Activated naive CD4-positive, alpha-beta T cell treated with anti-CD3 and anti-CD28 coated beads for 36 hours (primary cell): ENCODE measurements at regions of chr9 and their contacts with region 1.

Region 1: DNA sequence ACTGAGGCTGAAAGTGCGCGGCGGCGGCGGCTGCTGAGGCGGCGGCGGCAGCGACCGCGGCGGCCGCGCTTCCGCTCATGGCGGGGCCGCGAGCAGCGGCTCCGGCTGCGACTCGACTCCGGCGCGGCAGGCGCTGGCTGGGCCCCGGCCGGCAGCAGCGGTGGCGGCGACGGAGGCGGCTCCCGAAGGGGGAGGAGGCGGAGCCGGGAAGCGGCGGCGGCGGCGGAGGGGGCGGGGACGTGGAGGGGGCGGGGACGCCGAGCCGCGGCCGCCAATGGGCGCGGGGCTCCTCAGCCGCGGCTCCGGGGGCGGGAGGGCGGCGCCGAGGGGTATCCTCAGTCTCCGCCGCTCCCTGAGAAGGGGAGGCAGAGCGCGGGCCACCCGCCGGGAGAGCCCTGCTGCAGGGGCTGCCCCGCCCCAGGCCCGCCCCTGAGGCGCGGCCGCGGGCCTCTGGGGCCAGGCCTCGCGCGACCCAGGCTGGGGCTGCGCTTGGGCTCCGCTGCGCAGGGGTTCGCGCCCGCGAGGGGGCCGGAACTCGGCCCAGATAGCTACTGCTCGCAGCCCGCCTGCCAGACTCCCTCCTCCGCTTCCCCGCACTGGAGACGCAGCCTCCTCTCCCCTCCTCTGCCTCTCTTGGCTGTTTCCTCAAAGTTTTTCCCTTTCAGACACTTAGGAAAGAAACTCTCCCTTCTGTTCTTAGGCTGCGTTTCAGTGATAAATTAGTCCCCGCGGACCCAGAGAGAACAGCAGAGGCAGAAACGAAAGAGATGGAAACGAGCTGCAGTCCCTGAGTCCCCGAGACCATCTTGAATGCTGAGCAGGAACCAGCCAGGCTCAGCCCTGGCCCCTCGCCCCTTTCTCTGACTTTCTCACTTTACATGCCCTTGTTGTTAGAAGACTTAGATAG is 85.0 kb upstream of the MELK start:
- DNase-seq: peak; percentile 87
- H3K4me3 Mint-ChIP-seq: peak overlapping the region; percentile 90
- H3K27ac Mint-ChIP-seq: peak overlapping the region; percentile 98
- H3K4me1 Mint-ChIP-seq: peaks cover 61% of the 10 kb centered on the region
- H3K27me3 Mint-ChIP-seq: no peaks in the 10 kb centered on the region

Region 2: DNA sequence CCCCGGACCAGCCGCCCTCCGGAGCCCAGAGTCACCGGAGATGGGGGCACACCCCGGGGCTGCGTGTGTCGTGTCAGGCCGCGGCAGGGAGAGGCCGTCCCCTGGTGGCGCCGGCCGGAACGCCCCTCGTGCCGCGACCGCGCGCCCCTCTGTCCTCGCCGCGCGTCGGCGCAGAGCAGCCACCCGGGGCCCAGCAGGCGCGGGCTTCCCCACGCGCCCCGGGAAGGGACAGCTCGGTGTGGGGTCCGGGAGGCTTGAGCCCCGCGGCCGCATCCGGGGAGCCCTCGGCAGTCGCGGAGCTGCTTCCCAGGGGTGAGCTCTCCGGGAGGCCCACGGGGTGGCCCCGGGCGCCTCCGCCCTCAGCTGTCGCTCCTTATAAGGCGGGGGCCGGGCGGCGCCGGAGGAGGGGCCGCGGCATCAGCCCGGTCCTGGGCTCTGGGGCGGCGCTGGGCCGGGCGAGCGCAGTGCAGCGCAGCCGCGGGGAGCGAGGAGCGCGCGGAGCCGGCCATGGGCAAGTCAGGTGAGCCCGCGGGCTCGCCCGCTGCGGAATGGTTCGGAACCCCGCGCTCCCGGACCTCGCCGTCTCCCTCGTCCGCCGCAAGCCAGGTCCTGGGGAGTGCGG is 351.4 kb before region 1 on chr9 and contains the start of gene GLIPR2:
- CTCF ChIA-PET with region 1: no interaction called
- intact Hi-C with region 1: loop called (anchors 5 kb)
- DNase-seq: peak; percentile 80
- H3K4me3 Mint-ChIP-seq: peak within 1 kb of the TSS; percentile 86
- H3K27ac Mint-ChIP-seq: no peak within 1 kb of the TSS
- H3K4me1 Mint-ChIP-seq: peaks cover 44% of the 10 kb centered on the region
- H3K27me3 Mint-ChIP-seq: no peaks in the 10 kb centered on the region
- total RNA-seq, gene GLIPR2: 8.0 to 9.7 TPM

Region 3: DNA sequence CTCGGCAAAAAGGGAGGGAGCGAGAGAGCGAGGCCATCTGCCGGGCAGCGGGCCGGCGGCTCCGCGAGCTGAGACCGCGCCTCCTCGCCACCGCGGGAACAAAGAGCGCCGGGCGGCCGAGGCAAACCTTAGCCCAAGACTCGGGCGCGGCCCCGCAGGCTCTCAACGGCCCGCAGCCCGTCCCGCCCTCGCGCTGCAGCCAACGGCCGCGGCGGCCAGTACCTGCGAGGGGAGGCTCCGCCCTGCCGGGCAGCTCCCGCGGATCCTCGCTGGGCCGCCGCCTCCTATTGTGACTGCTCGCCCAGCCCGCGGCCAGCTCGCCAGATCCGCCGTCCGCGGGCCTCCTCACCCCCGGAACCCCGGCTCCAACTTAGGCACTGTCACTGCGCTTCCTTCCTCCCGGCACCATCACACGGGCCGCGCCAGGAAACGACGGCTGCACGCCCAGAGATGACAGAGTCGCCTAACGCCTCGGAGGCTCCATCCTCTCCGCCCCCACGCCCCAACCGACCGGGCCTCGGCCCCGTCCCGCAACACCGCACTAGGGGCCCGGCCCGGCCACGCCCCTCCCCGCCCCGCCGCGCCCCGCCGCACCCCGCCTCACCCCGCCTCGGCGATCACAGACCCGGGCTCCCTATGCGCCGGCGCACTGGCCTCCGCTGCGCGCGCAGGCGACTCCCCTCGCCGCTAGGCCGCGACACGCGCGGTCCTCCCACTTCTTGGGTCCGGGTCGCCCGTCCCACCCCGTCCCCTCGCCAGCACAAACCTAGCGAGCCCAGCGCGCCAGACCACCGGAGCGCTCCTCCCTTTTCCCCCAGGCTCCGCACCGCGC is 87.2 kb before region 1 on chr9:
- CTCF ChIA-PET with region 1: interaction called, 3 read pairs
- intact Hi-C with region 1: loop called (anchors 1 kb)
- DNase-seq: peak; percentile 90
- H3K4me3 Mint-ChIP-seq: peak overlapping the region; percentile 86
- H3K27ac Mint-ChIP-seq: peak overlapping the region; percentile 95
- H3K4me1 Mint-ChIP-seq: peaks cover 37% of the 10 kb centered on the region
- H3K27me3 Mint-ChIP-seq: no peaks in the 10 kb centered on the region

Region 4: GRCh38 chr9:36470643-36471290 is 17.0 kb before region 1 on chr9:
- CTCF ChIA-PET with region 1: interaction called, 4 read pairs
- intact Hi-C with region 1: loop called (anchors 1 kb)
- DNase-seq: peak; percentile 78
- H3K4me3 Mint-ChIP-seq: peak overlapping the region; percentile 65
- H3K27ac Mint-ChIP-seq: peak overlapping the region; percentile 89
- H3K4me1 Mint-ChIP-seq: peaks cover 34% of the 10 kb centered on the region
- H3K27me3 Mint-ChIP-seq: no peaks in the 10 kb centered on the region

Region 5: DNA sequence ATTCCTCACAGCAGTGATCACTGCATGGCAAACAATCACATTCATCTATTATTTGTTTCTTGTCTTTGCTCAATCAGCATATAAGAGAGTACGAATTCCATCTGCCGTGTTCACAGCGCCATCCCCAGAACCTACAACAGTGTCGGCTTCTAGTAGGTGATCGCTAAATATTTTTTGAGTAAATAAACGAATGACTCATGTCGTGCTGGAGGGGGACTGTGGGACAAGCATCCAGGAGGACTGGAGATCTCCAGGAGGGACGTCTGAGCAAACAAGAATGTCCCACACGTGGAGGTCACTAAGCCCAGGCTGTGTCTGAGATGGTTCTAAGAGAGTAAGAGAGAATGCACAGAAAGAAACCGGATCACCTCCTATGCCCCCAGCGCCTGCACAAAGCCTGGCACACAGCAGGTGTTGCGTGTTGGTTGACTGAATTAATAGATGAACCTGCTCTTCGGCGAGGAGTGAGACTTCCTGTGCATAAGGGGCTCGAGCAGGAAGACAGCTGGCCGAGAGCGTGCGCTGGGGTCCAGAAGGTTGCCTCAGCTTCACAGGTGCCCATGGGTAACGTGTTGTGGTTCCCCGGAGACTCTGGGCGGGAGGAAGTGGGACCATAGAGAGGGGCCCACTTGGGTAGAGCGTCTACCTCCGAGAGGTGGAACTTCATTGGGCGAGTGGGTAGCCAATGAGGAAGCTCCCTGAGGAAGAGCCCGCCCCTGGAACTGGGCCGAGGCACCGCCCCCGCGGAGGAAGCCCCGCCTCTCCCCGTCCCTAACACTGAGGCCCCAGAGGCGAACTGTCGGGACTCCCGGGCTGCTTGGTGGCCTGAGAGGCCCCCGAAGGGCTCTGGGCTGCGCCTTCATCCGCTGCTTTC is 278.0 kb after region 1 on chr9:
- CTCF ChIA-PET with region 1: no interaction called
- intact Hi-C with region 1: loop called (anchors 5 kb)
- DNase-seq: peak; percentile 95
- H3K4me3 Mint-ChIP-seq: peak overlapping the region; percentile 70
- H3K27ac Mint-ChIP-seq: no peak overlapping the region
- H3K4me1 Mint-ChIP-seq: no peaks in the 10 kb centered on the region
- H3K27me3 Mint-ChIP-seq: peaks cover 4% of the 10 kb centered on the region

Region 6: GRCh38 chr9:37820142-37820541 is 1332.4 kb after region 1 on chr9:
- CTCF ChIA-PET with region 1: no interaction called
- intact Hi-C with region 1: no loop called
- DNase-seq: no peak
- H3K4me3 Mint-ChIP-seq: no peak overlapping the region
- H3K27ac Mint-ChIP-seq: no peak overlapping the region
- H3K4me1 Mint-ChIP-seq: peaks cover 1% of the 10 kb centered on the region
- H3K27me3 Mint-ChIP-seq: no peaks in the 10 kb centered on the region